Right lobe of liver (tissue), 6 donors: ENCODE measurements at regions of chr1 and their contacts with region 1.

Region 1: DNA sequence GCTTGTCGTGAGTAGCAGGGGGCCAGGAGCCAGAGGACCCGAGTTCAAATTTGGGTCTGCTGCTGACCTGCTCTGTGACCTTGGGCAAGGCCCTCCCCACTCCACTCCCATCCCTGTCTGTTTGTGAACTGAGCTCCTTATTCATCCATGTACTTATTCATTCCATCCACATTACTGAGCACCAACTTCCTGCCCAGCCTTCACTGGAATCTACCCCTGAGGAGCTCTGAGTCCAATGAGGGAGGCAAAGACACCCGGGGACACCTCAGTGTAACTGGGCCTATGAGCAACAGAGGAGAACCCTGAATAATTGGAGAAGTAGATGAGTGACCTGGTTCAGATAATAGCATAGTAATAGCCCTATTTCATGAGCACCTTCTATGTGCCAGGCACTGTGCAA is 8.9 kb downstream of the BSND start:
- DNase-seq: no peak
- ATAC-seq: no peak
- H3K4me3 ChIP-seq: no peak overlapping the region
- H3K27ac ChIP-seq: no peak overlapping the region
- H3K4me1 ChIP-seq: no peaks in the 10 kb centered on the region
- H3K27me3 ChIP-seq: no peaks in the 10 kb centered on the region
- CTCF ChIP-seq: no peak
- POLR2A ChIP-seq: no peak

Region 2: GRCh38 chr1:54519709-54520108 is 487.9 kb before region 1 on chr1:
- intact Hi-C with region 1: loop called in 1 of 2 experiments (anchors 10 kb)
- DNase-seq: no peak
- ATAC-seq: peak in 3 of 4 donors; percentile 38 to 61 (median 56)
- H3K4me3 ChIP-seq: no peak overlapping the region
- H3K27ac ChIP-seq: no peak overlapping the region
- H3K4me1 ChIP-seq: no peaks in the 10 kb centered on the region
- H3K27me3 ChIP-seq: no peaks in the 10 kb centered on the region
- CTCF ChIP-seq: peak in 2 of 4 donors; percentile 18 to 27
- POLR2A ChIP-seq: no peak